Sciatic nerve (tissue), 2 donors: ENCODE measurements at regions of chr14 and their contacts with region 1.

Region 1: GRCh38 chr14:34741840-34742239 is 27.4 kb upstream of the CFL2 start:
- DNase-seq: no peak
- ATAC-seq: no peak

Region 2: GRCh38 chr14:33026850-33027430 is 1714.9 kb before region 1 on chr14:
- intact Hi-C with region 1: loop called (anchors 10 kb)
- DNase-seq: peak; percentile 81
- ATAC-seq: peak; percentile 84